Endothelial cell of umbilical vein (primary cell): ENCODE measurements at regions of chr6 and their contacts with region 1.

Region 1: GRCh38 chr6:43667245-43668150 is 20.1 kb downstream of the MRPS18A start:
- DNase-seq: peak; percentile 81
- H3K4me3 ChIP-seq: no peak overlapping the region
- H3K27ac ChIP-seq: no peak overlapping the region
- H3K4me1 ChIP-seq: peaks cover 5% of the 10 kb centered on the region
- H3K27me3 ChIP-seq: no peaks in the 10 kb centered on the region
- CTCF ChIP-seq: peak; percentile 91 to 98
- POLR2A ChIP-seq: no peak

Region 2: DNA sequence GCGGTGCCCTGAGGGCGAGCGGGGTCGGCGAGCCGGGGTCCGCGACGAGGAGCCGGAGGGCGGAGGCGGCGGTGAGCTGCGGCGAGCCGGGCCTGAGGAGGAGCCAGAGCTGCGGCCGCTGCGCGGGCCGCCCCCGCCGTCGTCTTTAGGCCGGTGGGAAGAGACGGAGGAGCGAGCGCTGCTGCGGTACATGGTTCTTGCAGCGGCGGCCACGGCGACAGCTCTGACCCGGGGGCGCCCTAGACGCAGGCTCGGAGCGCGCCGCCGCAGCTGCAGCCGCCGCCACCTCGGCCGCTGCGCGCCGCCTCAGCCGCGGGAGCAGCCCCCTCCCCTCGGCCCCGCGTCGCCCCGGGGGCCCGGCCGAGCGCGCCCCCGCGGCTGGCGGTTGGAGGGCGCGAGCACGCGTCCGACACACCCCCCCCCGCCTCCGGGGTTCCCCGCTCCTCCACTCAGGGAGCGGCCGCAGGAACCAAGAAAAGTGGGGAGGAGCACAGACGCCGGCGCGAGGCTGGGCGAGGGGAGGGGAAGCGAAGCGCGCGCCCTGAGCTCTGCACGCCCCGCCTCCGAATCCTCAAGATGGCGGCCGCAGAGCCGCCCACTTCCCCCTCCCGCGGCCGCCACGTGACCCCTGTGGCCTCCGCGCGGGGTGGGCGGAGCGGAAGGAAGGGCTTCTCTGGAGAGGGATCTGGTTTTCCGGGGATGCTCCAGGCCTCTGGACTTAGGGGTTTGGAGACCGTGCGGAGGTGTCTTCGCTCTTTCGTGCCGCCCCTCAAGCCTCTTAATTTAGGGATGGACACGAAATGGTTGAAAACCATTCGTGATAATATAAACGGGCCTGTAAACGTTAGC is 298.1 kb before region 1 on chr6 and contains the start of gene ZNF318:
- CTCF ChIA-PET with region 1: no interaction called
- POLR2A ChIA-PET with region 1: no interaction called
- dilution Hi-C with region 1: no loop called
- intact Hi-C with region 1: no loop called
- DNase-seq: peak; percentile 95
- H3K4me3 ChIP-seq: peak within 1 kb of the TSS; percentile 31 to 66 (median 63)
- H3K27ac ChIP-seq: peak within 1 kb of the TSS; percentile 51
- H3K4me1 ChIP-seq: peaks cover 8% of the 10 kb centered on the region
- H3K27me3 ChIP-seq: no peaks in the 10 kb centered on the region
- CTCF ChIP-seq: no peak
- POLR2A ChIP-seq: peak; percentile 73
- total RNA-seq, gene ZNF318: 13.0 and 13.6 TPM in 2 replicates

Region 3: DNA sequence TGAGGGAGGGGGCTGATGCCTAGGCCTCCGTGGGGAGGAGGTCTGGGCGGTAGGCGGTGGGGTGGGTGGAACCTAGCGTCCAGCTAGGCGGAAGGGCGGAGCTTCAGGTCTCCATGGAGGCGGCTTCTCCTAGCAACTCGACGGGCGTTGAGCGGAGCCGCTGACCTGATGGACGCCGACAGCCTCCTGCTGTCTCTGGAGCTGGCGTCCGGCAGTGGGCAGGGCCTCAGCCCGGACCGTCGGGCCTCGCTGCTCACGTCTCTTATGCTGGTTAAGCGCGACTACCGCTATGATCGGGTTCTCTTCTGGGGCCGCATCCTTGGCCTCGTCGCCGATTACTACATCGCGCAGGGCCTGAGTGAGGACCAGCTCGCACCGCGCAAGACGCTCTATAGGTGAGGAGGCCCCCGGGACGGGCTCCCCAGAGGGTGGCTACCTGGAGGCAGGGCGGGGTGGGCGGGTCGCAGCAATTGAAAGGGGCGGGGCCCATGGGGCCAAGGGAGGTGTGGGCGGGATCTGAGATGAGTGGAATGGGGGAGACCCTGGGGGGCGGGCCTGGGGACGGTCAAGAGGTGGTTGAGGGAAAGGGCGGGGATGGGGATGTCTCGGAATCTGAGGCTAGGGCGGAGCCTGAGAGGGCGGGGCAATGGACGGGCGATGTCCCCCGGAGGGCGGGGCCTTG is 22.4 kb before region 1 on chr6 and contains the start of gene RSPH9:
- CTCF ChIA-PET with region 1: interaction called, 11 read pairs
- POLR2A ChIA-PET with region 1: no interaction called
- dilution Hi-C with region 1: no loop called
- intact Hi-C with region 1: no loop called
- DNase-seq: peak; percentile 48
- H3K4me3 ChIP-seq: peak within 1 kb of the TSS; percentile 50 to 68 (median 51)
- H3K27ac ChIP-seq: no peak within 1 kb of the TSS
- H3K4me1 ChIP-seq: peaks cover 7% of the 10 kb centered on the region
- H3K27me3 ChIP-seq: no peaks in the 10 kb centered on the region
- CTCF ChIP-seq: no peak
- POLR2A ChIP-seq: no peak
- total RNA-seq, gene RSPH9: 0.12 and 0.27 TPM in 2 replicates

Region 4: GRCh38 chr6:43687437-43688347 is 20.2 kb after region 1 on chr6 and contains the start of gene MRPS18A:
- CTCF ChIA-PET with region 1: interaction called, 49 read pairs
- POLR2A ChIA-PET with region 1: no interaction called
- dilution Hi-C with region 1: no loop called
- intact Hi-C with region 1: no loop called
- DNase-seq: peak; percentile 71
- H3K4me3 ChIP-seq: peak within 1 kb of the TSS; percentile 45 to 95 (median 64)
- H3K27ac ChIP-seq: peak within 1 kb of the TSS; percentile 64
- H3K4me1 ChIP-seq: peaks cover 13% of the 10 kb centered on the region
- H3K27me3 ChIP-seq: no peaks in the 10 kb centered on the region
- CTCF ChIP-seq: no peak
- POLR2A ChIP-seq: peak; percentile 92
- total RNA-seq, gene MRPS18A: 39.1 and 39.8 TPM in 2 replicates

Region 5: DNA sequence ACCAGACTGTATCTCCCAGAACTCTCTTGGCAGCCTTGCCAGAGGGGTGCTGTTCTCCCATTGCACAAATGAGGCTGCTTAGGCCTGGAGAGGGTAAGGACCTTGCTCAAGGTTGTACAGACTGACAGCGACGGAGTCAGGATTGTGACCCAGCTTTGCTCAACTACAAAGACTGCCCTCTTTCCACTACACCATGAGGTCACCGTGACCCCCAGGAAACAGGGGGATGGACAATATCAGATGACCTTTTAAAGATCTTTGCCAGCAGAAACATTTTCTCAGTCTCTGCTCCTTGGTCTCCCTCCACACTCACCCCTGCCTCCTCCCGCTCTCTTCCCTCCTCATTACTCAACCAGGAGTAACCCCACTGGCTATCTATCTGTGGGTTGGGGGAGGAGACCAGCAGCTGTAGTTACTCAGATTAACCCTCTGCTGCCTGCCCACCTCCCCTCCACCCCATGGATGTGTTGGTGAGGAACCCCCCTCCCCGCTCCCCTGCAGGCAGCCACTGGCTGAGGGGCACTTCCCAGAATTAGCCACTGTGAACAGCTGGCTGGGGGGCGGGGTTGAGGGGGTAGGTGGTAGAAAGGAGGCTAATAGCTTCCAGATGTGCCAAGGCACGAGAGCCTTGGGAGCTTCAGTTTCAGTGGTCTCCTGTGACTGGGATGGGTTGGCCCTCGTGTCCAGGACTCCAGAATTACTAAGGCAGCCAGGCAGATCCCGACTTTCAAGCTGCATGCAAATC is 47.0 kb after region 1 on chr6:
- CTCF ChIA-PET with region 1: interaction called, 33 read pairs
- POLR2A ChIA-PET with region 1: no interaction called
- dilution Hi-C with region 1: no loop called
- intact Hi-C with region 1: no loop called
- DNase-seq: no peak
- H3K4me3 ChIP-seq: no peak overlapping the region
- H3K27ac ChIP-seq: no peak overlapping the region
- H3K4me1 ChIP-seq: peaks cover 10% of the 10 kb centered on the region
- H3K27me3 ChIP-seq: no peaks in the 10 kb centered on the region
- CTCF ChIP-seq: no peak
- POLR2A ChIP-seq: no peak

Region 6: DNA sequence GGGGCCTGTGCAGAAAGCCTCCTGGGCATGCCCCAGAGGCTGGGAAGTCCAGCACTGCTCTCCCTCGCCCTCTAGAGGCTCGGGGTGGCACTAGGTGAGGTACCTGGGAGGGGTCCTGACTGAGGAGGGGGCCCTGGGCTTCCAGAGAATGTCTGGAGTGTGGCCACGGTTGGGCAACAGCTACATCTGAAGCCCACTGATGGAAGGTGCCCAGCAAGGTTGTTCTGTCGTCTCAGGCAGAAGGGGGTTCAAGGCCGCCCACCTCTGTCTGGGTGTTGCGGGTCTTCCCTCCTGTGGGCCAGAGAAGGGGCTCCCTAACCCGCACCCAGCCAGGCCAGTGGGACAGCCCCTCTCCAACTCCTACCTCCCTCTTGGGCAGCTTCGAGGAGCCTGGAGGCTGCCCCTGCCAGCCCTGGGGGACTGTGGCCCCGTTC is 91.1 kb after region 1 on chr6:
- CTCF ChIA-PET with region 1: interaction called, 67 read pairs
- POLR2A ChIA-PET with region 1: no interaction called
- dilution Hi-C with region 1: no loop called
- intact Hi-C with region 1: loop called (anchors 1 kb)
- DNase-seq: peak; percentile 21
- H3K4me3 ChIP-seq: no peak overlapping the region
- H3K27ac ChIP-seq: no peak overlapping the region
- H3K4me1 ChIP-seq: peaks cover 5% of the 10 kb centered on the region
- H3K27me3 ChIP-seq: peaks cover 8 to 14% of the 10 kb centered on the region in 2 experiments
- CTCF ChIP-seq: peak; percentile 60 to 81
- POLR2A ChIP-seq: no peak

Region 7: GRCh38 chr6:43774776-43775534 is 107.5 kb after region 1 on chr6:
- CTCF ChIA-PET with region 1: interaction called, 90 read pairs
- POLR2A ChIA-PET with region 1: interaction called, 3 read pairs
- dilution Hi-C with region 1: no loop called
- intact Hi-C with region 1: loop called (anchors 1 kb)
- DNase-seq: peak; percentile 55
- H3K4me3 ChIP-seq: peak overlapping the region in 1 of 3 experiments; percentile 8
- H3K27ac ChIP-seq: no peak overlapping the region
- H3K4me1 ChIP-seq: peaks cover 19% of the 10 kb centered on the region
- H3K27me3 ChIP-seq: no peaks in the 10 kb centered on the region
- CTCF ChIP-seq: peak; percentile 80 to 92
- POLR2A ChIP-seq: no peak